ENCODE measurements at regions of chr3 and their contacts with region 1.

Region 1: DNA sequence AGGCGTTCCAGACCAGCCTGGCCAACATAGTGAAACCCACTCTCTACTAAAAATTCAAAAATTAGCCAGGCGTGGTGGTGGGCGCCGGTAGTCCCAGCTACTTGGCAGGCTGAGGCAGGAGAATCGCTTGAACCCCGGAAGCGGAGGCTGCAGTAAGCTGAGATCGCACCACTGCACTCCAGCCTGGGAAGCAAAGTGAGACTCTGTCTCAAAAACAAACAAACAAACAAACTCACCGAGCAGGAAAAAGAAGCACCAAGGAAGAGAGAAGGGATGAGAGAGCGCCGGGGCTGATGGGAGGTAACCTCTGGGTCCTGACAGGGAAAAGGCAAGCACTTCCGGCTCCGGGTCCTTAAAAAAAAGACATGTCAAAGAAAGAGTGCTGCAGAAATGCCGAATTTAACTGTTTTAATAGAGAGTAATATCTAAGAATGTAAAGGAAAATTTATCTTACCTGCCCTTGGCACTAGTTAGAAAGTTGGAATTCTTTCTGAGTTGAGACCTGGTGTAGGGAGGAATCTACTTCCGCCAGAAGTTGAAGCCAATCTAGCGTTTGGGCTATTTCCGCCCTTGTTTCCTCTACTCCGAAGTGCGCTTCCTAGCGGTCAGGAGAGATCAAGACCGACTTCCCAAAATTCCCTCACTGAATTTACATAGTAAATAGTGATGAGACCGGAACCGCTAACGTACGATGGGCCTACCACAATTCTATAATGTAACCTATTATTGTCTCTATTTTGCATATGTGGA is 29.1 kb downstream of the EFCAB12 start:
- DNase-seq: peak; percentile 85
- ATAC-seq: peak; percentile 82
- H3K4me3 Mint-ChIP-seq: peak overlapping the region; percentile 93
- H3K27ac Mint-ChIP-seq: peak overlapping the region; percentile 97
- H3K4me1 Mint-ChIP-seq: peaks cover 37% of the 10 kb centered on the region
- H3K27me3 Mint-ChIP-seq: no peaks in the 10 kb centered on the region

Region 2: GRCh38 chr3:129383292-129383860 is 15.9 kb before region 1 on chr3:
- CTCF ChIA-PET with region 1: interaction called, 22 read pairs
- POLR2A ChIA-PET with region 1: no interaction called
- DNase-seq: peak; percentile 62
- ATAC-seq: peak; percentile 96
- H3K4me3 Mint-ChIP-seq: no peak overlapping the region
- H3K27ac Mint-ChIP-seq: no peak overlapping the region
- H3K4me1 Mint-ChIP-seq: no peaks in the 10 kb centered on the region
- H3K27me3 Mint-ChIP-seq: no peaks in the 10 kb centered on the region

Region 3: GRCh38 chr3:129413687-129414506 is 14.6 kb after region 1 on chr3:
- CTCF ChIA-PET with region 1: interaction called, 13 read pairs
- POLR2A ChIA-PET with region 1: interaction called, 4 read pairs
- DNase-seq: no peak
- ATAC-seq: no peak
- H3K4me3 Mint-ChIP-seq: no peak overlapping the region
- H3K27ac Mint-ChIP-seq: no peak overlapping the region
- H3K4me1 Mint-ChIP-seq: no peaks in the 10 kb centered on the region
- H3K27me3 Mint-ChIP-seq: peaks cover 9% of the 10 kb centered on the region

Region 4: GRCh38 chr3:129439817-129440617 is 40.7 kb after region 1 on chr3 and contains the starts of genes IFT122 and MBD4:
- CTCF ChIA-PET with region 1: interaction called, 15 read pairs
- POLR2A ChIA-PET with region 1: interaction called, 6 read pairs
- DNase-seq: peak; percentile 100
- ATAC-seq: peak; percentile 92
- H3K4me3 Mint-ChIP-seq: peak within 1 kb of the TSS; percentile 98
- H3K27ac Mint-ChIP-seq: peak within 1 kb of the TSS; percentile 91
- H3K4me1 Mint-ChIP-seq: peaks cover 62% of the 10 kb centered on the region
- H3K27me3 Mint-ChIP-seq: no peaks in the 10 kb centered on the region
- total RNA-seq, gene IFT122: 22.3 to 25.6 TPM
- total RNA-seq, gene MBD4: 50.1 to 50.6 TPM

Region 5: DNA sequence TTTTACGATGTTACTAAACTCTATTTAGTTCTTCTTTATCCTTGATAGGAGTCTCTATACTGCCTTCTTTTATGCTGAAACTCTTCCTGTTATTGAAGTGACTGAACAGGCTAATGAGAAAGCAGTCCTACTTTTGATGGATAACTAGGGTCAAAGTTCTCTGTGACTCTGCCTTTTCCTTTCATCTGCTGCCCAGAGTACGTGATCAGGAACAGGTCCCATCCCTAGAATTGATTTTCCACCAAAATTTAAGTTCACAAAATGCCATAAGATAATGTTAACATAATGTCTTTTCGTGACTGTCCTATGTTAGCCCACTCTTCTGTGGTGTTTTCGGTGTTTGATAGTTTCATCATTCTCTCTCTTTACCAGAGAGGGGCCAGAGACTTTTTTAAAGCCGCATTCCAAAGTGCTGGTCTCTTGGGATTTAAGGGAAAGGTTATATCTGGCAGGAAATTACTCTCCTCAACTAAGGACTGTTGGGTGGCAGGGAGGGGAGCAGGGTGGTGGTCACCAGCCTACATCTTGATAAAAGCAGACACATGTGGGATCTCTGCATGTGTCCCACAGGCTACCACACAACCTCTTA is 257.4 kb after region 1 on chr3:
- CTCF ChIA-PET with region 1: no interaction called
- POLR2A ChIA-PET with region 1: interaction called, 11 read pairs
- DNase-seq: no peak
- ATAC-seq: no peak
- H3K4me3 Mint-ChIP-seq: no peak overlapping the region
- H3K27ac Mint-ChIP-seq: no peak overlapping the region
- H3K4me1 Mint-ChIP-seq: peaks cover 14% of the 10 kb centered on the region
- H3K27me3 Mint-ChIP-seq: no peaks in the 10 kb centered on the region

Measured in activated CD8-positive, alpha-beta T cell treated with anti-CD3 and anti-CD28 coated beads, Interleukin-2, amount 10 ng/mL, durations not matched to agents 7 days and 5 days (primary cell).